ENCODE measurements at regions of chr7 and their contacts with region 1.

Region 1: GRCh38 chr7:143240291-143241168 is 18.7 kb downstream of the TAS2R40 start:
- DNase-seq: peak in 4 of 5 donors; percentile 70 to 89 (median 79)
- H3K4me3 ChIP-seq: no peak overlapping the region
- H3K27ac ChIP-seq: no peak overlapping the region
- H3K4me1 ChIP-seq: peaks cover 0 to 5% (median 0%) of the 10 kb centered on the region in 3 donors
- H3K27me3 ChIP-seq: no peaks in the 10 kb centered on the region
- CTCF ChIP-seq: peak; percentile 92

Region 2: GRCh38 chr7:143305423-143306070 is 65.0 kb after region 1 on chr7:
- intact Hi-C with region 1: loop called (anchors 10 kb)
- DNase-seq: peak in 2 of 5 donors; percentile 39 to 53
- H3K4me3 ChIP-seq: no peak overlapping the region
- H3K27ac ChIP-seq: no peak overlapping the region
- H3K4me1 ChIP-seq: no peaks in the 10 kb centered on the region
- H3K27me3 ChIP-seq: no peaks in the 10 kb centered on the region
- CTCF ChIP-seq: peak; percentile 69

Region 3: DNA sequence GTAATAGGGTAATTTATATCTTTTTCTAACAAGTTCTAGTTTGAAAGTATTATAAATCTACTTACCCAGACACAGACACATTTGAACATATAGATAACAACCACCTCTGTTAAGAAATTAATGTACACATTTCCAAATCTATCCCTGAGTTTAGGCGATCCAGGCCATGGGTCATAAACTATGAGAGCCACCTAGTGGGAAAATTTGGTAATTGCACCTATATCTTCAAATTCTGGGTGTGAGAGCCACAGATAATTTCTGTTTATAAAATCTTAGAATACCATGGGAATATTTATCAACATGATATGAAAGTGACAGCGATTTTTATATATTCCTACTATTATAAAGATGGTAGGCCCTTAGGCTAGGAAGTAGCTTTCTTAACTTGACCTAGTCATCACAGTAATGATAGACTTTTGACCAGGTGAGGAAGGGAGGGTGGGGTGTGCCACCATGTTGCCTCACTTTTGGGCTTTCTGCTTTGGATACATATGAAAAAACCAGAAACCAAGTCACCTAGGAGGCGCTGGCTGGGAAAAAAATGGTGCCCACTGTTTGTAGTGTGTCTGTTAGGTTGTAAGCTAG is 176.1 kb after region 1 on chr7:
- intact Hi-C with region 1: loop called (anchors 10 kb)
- DNase-seq: peak in 2 of 5 donors; percentile 48 to 66
- H3K4me3 ChIP-seq: peak overlapping the region in 1 of 3 donors; percentile 19
- H3K27ac ChIP-seq: no peak overlapping the region
- H3K4me1 ChIP-seq: peaks cover 0 to 2% (median 0%) of the 10 kb centered on the region in 3 donors
- H3K27me3 ChIP-seq: no peaks in the 10 kb centered on the region
- CTCF ChIP-seq: peak; percentile 65